Cardiac septum (tissue), 1 donor: ENCODE measurements at regions of chr12 and their contacts with region 1.

Region 1: DNA sequence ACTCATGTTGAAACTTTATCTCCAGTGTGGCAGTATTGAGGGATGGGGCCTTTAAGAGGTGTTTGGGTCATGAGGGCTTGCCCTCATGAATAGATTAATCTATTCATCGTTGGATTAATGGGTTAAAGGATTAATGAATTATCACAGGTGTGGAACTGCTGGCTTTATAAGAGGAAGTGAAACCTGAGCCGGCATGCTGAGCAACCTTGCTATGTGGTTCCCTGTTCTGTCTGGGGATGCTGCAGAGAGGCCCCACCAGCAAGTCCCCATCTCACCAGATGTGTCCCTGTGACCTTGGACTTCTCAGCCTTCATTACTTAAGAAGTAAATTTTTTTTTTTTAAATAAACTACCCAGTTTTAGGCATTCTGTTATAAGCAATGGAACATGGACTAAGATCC is 109.6 kb downstream of the DYRK2 start:
- DNase-seq: no peak

Region 2: DNA sequence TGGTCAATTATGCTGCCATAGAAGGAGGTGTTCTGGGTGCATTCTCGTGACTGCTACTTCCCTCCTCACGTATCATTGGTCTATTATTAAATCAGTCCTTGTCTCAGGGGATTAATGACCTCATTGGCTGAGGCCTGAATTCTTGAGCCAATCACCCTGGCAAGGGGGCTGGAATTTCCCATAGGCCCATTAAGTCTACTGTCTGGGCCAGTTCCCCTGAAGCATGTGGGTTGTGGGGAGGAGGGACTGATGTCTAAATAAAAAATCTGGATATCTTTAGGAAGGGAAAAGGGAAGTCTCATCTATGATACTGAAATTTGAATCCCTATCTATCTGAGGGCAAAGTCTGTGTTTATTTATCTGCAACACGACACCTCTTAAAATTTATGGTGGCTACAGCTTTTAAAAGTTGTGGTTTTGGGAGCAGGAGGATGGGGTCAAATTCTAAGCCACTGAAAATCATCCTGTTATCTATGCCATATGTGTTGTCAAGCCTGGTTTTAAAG is 37.7 kb before region 1 on chr12:
- intact Hi-C with region 1: loop called (anchors 5 kb)
- DNase-seq: no peak